GM13977 (cell line): ENCODE measurements at regions of chr10 and their contacts with region 1.

Region 1: DNA sequence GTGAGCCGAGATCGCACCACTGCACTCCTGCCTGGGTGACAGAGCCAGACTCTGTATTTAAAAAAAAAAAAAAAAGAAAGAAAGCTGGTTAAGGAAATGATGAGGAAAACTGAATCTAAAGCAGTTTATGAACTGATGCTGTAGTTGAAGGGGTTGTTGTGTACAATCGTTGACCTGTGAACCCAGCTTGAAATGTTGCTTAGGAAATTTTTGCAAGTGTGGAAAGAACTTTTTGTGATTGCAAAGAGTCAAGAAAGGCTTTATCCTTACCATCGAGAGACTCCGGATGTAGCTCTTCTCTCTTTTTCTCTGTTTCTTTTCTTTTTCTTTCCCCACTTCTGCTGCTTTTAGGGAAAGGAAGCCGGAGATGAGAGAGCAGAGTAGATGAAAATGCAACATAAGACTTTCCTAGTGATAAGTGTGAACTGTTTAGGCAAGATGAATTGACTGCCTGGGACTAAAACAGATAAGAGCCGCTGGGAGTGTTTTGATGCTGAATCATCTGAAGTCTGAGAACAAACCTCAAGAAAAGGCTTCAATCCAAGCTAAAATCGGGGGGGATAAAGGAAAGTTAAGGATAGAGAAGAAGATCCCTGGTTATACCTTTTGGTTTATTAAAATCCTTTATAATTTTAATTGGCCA is 69.0 kb downstream of the TAF3 start:
- DNase-seq: no peak
- CTCF ChIP-seq: no peak

Region 2: GRCh38 chr10:7362471-7362870 is 524.8 kb before region 1 on chr10:
- in situ Hi-C with region 1: no loop called
- DNase-seq: no peak
- CTCF ChIP-seq: no peak

Region 3: DNA sequence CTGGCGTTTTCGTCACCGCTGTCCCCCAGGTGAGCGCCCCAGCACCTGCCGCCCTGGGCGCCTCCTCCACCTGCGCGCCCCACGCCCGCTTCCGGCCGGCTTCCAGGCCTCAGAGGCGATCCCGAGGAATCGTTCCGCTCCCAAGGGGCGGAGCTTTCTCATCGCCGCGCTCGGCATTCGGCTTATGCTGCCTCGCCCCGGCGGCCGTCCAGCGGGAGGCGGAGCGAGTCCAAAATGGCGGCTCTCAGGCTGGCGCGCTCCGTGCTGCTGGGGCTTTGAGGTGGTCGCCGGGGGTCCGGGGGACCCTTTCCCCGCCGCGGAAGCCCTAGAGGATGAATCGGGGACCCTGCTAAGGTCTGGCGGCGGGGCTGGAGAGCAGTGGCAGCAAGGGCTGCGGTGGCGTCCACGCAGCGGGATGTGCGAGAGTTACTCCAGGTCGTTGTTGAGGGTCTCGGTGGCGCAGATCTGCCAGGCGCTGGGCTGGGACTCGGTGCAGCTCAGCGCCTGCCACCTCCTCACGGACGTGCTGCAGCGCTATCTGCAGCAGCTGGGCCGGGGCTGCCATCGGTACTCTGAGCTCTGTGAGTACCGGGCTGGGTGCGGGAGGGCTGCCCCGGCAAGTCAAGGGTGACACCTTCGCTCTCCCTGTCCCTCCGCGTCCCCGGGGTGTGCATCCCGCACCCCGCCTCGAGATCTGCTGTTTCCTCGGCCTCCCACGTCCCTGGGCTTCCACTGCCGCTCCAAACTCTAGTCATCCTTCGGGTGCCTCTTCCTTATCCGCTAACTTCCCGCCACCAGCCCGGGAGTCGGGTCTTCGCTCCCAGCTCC is 68.8 kb before region 1 on chr10 and contains the start of gene TAF3:
- in situ Hi-C with region 1: no loop called
- DNase-seq: peak; percentile 92
- CTCF ChIP-seq: no peak

Region 4: GRCh38 chr10:9209105-9209798 is 1322.0 kb after region 1 on chr10:
- in situ Hi-C with region 1: loop called (anchors 25 kb)
- DNase-seq: peak; percentile 51
- CTCF ChIP-seq: peak; percentile 90